HCT116 (cell line): ENCODE measurements at regions of chr11 and their contacts with region 1.

Region 1: DNA sequence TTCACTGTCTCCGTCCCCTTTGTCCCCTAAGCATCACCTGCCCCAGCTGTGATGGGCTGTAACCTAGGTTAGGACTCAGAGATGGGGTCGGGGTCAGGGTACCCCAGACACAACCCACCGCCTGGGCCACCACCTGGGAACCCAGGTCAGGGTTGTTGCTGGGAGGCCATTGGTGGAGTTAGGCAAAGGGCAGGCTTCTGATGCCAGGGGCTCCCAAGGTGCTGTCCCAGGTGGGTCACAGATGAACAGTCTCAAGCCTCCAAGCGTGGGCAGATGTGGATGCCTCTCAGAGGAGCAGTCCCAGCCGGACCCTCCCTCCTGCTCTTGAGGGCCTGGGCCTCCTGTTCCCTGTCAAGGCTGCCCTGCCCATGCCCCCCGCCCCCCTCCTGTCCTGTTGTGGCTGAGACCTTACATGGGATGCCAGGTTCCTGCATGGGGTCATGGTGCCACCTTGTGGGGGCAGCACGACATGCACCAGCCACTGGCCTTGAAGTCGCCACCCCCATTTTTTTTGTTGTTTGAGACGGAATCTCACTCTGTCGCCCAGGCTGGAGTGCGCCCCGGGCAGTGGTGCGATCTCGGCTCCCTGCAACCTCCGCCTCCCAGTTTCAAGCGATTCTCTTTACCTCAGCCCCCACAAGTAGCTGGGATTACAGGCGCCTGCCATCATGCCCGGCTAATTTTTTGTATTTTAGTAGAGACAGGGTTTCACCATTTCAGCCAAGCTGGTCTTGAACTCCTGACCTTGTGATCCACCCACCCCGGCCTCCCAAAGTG is 12.1 kb downstream of the GATD1 start:
- DNase-seq: peak; percentile 47
- ATAC-seq: peak; percentile 43
- H3K4me3 ChIP-seq: no peak overlapping the region
- H3K27ac ChIP-seq: peak overlapping the region; percentile 45
- H3K4me1 ChIP-seq: peaks cover 20 to 48% of the 10 kb centered on the region in 2 experiments
- H3K27me3 ChIP-seq: no peaks in the 10 kb centered on the region
- CTCF ChIP-seq: peak; percentile 73 to 84 (median 73); a peak in 5 of 6 replicates
- POLR2A ChIP-seq: no peak
- RAD21 ChIP-seq: peak; percentile 83

Region 2: GRCh38 chr11:662689-663274 is 102.4 kb before region 1 on chr11:
- CTCF ChIA-PET with region 1: no interaction called
- POLR2A ChIA-PET with region 1: no interaction called
- RAD21 ChIA-PET with region 1: no interaction called
- intact Hi-C with region 1: loop called (anchors 1 kb)
- DNase-seq: peak; percentile 48
- ATAC-seq: peak; percentile 98
- H3K4me3 ChIP-seq: no peak overlapping the region
- H3K27ac ChIP-seq: no peak overlapping the region
- H3K4me1 ChIP-seq: no peaks in the 10 kb centered on the region
- H3K27me3 ChIP-seq: no peaks in the 10 kb centered on the region
- CTCF ChIP-seq: peak; percentile 85 to 90 (median 88)
- POLR2A ChIP-seq: no peak
- RAD21 ChIP-seq: peak; percentile 89

Region 3: DNA sequence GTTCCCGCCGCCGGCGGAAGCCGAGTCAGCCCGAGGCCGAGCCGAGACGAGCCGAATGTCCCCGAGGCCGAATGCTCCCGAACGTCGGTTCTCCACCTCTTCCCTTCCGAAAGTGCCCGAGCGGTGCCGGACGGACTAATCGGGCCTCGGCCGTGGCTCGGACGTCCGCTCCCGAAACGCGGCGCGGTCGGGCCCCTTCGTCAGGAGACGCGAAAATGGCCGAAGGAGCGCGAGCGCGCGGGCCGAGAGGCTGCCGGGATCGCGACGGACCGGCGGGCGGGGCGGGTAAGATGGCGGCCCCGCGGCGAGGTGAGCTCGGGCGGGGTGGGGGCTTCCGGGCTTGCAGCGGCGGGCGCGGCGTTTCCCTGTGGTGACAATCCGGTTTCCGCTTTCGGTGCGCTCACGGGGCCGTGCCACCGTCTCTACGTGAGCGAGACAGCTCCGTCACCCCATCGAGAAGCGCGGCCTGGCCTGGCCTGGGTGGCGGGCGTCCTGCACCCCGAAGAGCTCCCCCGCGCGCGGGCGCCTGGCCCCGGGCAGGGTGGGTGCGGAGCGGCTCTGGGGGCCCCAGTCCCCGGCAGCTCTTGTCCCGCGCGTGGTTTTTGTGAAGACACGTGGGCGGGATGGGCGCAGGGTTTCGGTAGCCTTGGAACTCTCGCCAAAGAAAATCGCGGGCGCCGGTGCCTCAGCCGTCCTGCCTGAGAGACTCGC is 69.5 kb before region 1 on chr11 and contains the start of gene TMEM80:
- CTCF ChIA-PET with region 1: interaction called, 4 read pairs
- POLR2A ChIA-PET with region 1: no interaction called
- RAD21 ChIA-PET with region 1: no interaction called
- intact Hi-C with region 1: loop called (anchors 1 kb)
- DNase-seq: peak; percentile 96
- ATAC-seq: peak; percentile 86
- H3K4me3 ChIP-seq: peak within 1 kb of the TSS; percentile 75 to 94
- H3K27ac ChIP-seq: peak within 1 kb of the TSS; percentile 99
- H3K4me1 ChIP-seq: peaks cover 8 to 34% of the 10 kb centered on the region in 2 experiments
- H3K27me3 ChIP-seq: no peaks in the 10 kb centered on the region
- CTCF ChIP-seq: no peak
- POLR2A ChIP-seq: peak; percentile 45
- RAD21 ChIP-seq: no peak
- total RNA-seq, gene TMEM80: 18.4 TPM

Region 4: GRCh38 chr11:747158-748006 is 17.8 kb before region 1 on chr11 and contains the start of gene TALDO1:
- CTCF ChIA-PET with region 1: interaction called, 10 read pairs
- POLR2A ChIA-PET with region 1: interaction called, 9 read pairs
- RAD21 ChIA-PET with region 1: no interaction called
- intact Hi-C with region 1: no loop called
- DNase-seq: peak; percentile 57
- ATAC-seq: peak; percentile 95
- H3K4me3 ChIP-seq: peak within 1 kb of the TSS; percentile 79 to 91
- H3K27ac ChIP-seq: peak within 1 kb of the TSS; percentile 91
- H3K4me1 ChIP-seq: peaks cover 24 to 57% of the 10 kb centered on the region in 2 experiments; a peak in 3 of 4 replicates
- H3K27me3 ChIP-seq: no peaks in the 10 kb centered on the region
- CTCF ChIP-seq: 0 out of 6 replicates have a peak, but pooled peaks of 1 of the 3 experiments have one; percentile 1
- POLR2A ChIP-seq: peak; percentile 61
- RAD21 ChIP-seq: no peak
- total RNA-seq, gene TALDO1: 242 TPM